Posterior vena cava (tissue), 2 donors: ENCODE measurements at regions of chr11 and their contacts with region 1.

Region 1: GRCh38 chr11:40434926-40435325 is 1024.5 kb downstream of the LRRC4C start:
- DNase-seq: no peak

Region 2: GRCh38 chr11:40647290-40647689 is 212.4 kb after region 1 on chr11:
- intact Hi-C with region 1: loop called in 1 of 2 experiments (anchors 5 kb)
- DNase-seq: no peak

Region 3: DNA sequence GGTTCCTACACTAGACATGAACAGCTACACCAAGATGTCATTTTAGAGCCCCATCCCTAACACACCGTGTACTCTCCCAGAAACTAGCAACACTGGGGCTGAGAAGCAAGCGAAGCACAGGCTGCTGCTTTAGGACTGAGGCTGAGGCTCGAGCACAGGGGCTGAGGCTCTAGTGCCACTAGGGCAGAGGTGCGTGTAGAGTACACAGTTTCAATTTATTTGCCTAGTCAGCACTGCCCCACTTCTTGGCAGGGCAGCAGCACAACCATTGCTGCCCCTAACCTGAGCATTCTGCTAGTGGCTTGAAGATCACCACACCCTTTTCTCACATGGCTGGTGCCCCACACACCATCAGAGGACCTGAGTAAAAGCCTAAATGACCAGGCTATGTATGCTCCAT is 311.4 kb after region 1 on chr11:
- intact Hi-C with region 1: no loop called
- DNase-seq: no peak